Endothelial cell of umbilical vein (primary cell): ENCODE measurements at regions of chr4 and their contacts with region 1.

Region 1: DNA sequence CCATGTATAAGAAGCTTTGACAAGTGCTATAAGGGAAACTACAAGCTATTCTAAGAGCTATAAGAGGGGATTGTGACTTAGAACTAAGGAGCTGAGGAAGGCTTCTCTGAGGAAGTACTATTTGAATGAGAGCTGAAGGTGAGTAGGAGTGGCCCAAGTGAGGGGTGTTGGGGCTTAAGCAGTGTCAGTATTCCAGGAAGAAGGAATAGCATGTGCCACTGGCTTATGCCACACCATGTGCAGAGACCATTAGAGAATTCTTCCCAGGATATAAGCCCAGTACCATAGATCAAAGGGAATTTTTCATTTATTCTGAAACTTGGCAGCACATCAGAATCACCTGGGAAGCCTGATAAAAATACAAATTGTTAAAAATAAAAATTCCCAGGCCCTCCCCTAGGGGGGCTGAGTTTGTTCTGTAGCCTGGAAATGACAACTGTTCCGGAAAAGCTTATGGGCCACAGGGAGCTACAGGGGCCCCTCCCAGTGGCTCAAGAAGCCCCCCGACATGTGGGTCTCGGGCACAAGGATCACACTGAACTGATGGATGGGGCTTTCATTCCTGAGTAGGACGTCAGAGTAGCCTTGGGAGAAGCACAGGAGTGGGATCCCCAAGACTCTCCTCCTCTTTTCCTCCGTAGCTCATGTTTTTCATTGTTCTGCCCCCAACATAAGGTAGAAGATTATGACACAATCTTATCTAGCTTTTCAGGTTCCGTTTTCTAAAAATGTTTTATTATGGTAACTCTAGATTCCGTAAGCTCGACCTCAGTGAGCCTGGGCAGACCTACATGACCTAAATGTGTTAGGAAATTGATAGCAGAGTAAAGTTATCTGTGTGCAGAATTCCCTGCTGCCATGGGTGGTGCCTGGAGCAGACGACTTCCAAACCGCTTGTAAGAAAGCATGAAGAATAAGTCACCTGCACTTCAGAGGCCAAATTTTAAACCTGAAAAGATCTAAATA is 119.3 kb downstream of the AFF1 start:
- DNase-seq: peak; percentile 56
- H3K4me3 ChIP-seq: no peak overlapping the region
- H3K27ac ChIP-seq: no peak overlapping the region
- H3K4me1 ChIP-seq: peaks cover 27% of the 10 kb centered on the region
- H3K27me3 ChIP-seq: no peaks in the 10 kb centered on the region
- CTCF ChIP-seq: no peak
- POLR2A ChIP-seq: no peak

Region 2: DNA sequence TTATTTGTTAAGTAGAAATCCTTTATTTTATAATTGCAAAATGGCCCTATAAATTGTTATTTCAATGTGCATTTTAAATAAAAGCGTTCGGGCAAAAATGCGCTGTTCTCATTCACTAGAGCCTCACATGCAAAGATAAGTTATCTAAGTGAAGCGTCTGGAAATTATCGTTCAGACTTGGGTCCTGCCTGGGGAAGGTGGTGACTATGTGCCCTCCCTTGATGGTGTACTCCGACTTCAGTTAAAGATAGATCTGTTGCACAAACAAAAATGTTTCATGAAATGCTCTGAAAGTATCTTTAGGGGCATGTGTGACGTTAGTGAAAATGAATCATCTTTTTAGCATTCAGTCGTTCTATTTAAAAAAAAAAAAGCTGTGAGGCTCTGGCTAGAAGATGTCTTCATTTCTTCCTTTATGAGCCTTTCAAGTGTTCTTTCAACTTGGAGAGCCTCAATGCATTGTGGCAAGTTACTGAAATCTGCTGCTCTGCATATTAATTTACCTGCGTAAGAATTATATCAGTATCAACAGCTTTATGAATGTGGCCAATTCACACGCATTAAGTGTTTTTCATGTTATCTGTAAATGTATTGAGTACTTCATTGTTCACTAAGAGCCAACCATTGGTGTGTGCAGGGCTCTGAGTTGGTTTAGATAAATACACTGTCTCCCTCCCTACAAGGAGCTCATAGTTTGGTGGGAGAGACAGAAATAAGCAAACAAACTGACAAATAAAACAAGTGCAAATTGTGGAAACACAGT is 36.3 kb before region 1 on chr4:
- CTCF ChIA-PET with region 1: no interaction called
- POLR2A ChIA-PET with region 1: no interaction called
- dilution Hi-C with region 1: no loop called
- intact Hi-C with region 1: no loop called
- DNase-seq: no peak
- H3K4me3 ChIP-seq: no peak overlapping the region
- H3K27ac ChIP-seq: no peak overlapping the region
- H3K4me1 ChIP-seq: peaks cover 27% of the 10 kb centered on the region
- H3K27me3 ChIP-seq: no peaks in the 10 kb centered on the region
- CTCF ChIP-seq: no peak
- POLR2A ChIP-seq: no peak

Region 3: DNA sequence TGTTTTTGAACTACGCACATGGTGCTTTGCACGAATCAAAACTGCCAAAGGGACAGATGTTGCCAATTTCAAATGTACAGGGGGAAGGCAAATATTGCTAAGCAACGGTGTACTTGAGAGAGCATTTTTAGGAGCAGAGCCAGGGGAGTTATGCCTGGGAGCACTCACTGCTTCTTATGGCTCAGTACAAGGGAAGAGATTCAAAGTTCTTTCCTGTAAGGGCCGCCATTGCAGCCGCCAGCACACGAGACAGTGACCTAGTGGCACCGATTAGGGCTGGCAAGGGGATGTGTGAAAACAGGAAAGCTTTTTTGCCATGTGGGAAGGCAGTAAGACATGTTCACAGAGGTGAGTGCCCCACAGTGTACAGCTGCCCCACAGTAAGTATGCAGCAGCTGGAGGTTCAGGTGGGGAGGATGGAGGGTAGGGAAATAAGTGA is 14.5 kb after region 1 on chr4:
- CTCF ChIA-PET with region 1: interaction called, 4 read pairs
- POLR2A ChIA-PET with region 1: no interaction called
- dilution Hi-C with region 1: no loop called
- intact Hi-C with region 1: loop called (anchors 2 kb)
- DNase-seq: no peak
- H3K4me3 ChIP-seq: no peak overlapping the region
- H3K27ac ChIP-seq: no peak overlapping the region
- H3K4me1 ChIP-seq: peaks cover 8% of the 10 kb centered on the region
- H3K27me3 ChIP-seq: no peaks in the 10 kb centered on the region
- CTCF ChIP-seq: no peak
- POLR2A ChIP-seq: no peak